ENCODE measurements at regions of chr20 and their contacts with region 1.

Region 1: GRCh38 chr20:45629496-45630100 is at the start of gene WFDC10A:
- DNase-seq: peak; percentile 72
- H3K4me3 Mint-ChIP-seq: no peak within 1 kb of the TSS
- H3K27ac Mint-ChIP-seq: no peak within 1 kb of the TSS
- H3K4me1 Mint-ChIP-seq: no peaks in the 10 kb centered on the region
- H3K27me3 Mint-ChIP-seq: peaks cover 38% of the 10 kb centered on the region
- CTCF ChIP-seq: peak; percentile 53
- total RNA-seq, gene WFDC10A: not detected in 2 replicates

Region 2: GRCh38 chr20:45617591-45617990 is 12.0 kb before region 1 on chr20:
- CTCF ChIA-PET with region 1: interaction called, 18 read pairs
- POLR2A ChIA-PET with region 1: interaction called, 4 read pairs
- intact Hi-C with region 1: no loop called
- DNase-seq: no peak
- H3K4me3 Mint-ChIP-seq: no peak overlapping the region
- H3K27ac Mint-ChIP-seq: no peak overlapping the region
- H3K4me1 Mint-ChIP-seq: no peaks in the 10 kb centered on the region
- H3K27me3 Mint-ChIP-seq: no peaks in the 10 kb centered on the region
- CTCF ChIP-seq: no peak

Region 3: DNA sequence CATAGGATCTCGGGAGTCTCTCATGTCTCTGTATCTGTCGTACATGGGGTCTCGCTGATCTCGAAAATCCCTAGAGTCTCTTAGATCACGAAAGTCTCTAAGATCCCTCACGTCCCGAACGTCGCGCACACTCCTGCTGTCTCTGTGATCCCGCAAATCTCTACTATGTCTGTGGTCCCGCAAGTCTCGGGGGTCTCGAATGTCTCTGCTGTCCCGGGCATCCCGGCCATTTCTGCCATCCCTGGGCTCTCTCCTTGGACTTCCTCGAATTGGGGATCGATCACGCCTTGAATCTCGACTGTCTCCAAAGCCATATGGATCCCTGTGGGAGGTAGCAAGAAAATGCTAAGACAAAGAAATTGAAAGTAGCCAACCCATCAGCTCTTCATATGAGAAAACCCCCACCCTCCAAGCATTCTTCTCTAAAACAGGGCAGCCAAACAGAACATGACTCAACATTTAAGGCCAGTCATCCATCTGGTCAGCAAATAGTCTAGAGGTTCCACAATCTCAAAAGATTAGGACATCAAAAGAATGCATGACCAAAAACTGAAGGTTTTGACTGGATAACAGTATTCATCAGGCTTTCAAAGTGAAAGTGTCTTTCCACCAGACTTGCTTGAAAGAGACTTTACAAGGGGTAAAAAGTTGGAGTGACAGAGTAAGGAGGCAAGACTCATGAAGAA is 440.8 kb after region 1 on chr20:
- CTCF ChIA-PET with region 1: no interaction called
- POLR2A ChIA-PET with region 1: no interaction called
- intact Hi-C with region 1: no loop called
- DNase-seq: no peak
- H3K4me3 Mint-ChIP-seq: no peak overlapping the region
- H3K27ac Mint-ChIP-seq: no peak overlapping the region
- H3K4me1 Mint-ChIP-seq: peaks cover 8% of the 10 kb centered on the region
- H3K27me3 Mint-ChIP-seq: no peaks in the 10 kb centered on the region
- CTCF ChIP-seq: no peak